ENCODE measurements at regions of chr16 and their contacts with region 1.

Region 1: GRCh38 chr16:88628512-88628974 is 9.8 kb upstream of the IL17C start:
- DNase-seq: peak; percentile 77 to 90 (median 87)
- ATAC-seq: peak; percentile 97
- H3K4me3 ChIP-seq: no peak overlapping the region
- H3K27ac ChIP-seq: peak overlapping the region; percentile 73
- H3K4me1 ChIP-seq: peaks cover 10 to 56% of the 10 kb centered on the region in 2 experiments; a peak in 4 of 5 replicates
- H3K27me3 ChIP-seq: no peaks in the 10 kb centered on the region
- CTCF ChIP-seq: peak; percentile 79 to 91 (median 84)
- EP300 ChIP-seq: no peak; the same call in 1 of the 2 replicates
- POLR2A ChIP-seq: no peak; the same call in 1 of the 2 replicates
- RAD21 ChIP-seq: peak; percentile 34 to 65; a peak in 3 of 4 replicates

Region 2: GRCh38 chr16:88639231-88640038 is 10.9 kb after region 1 on chr16:
- CTCF ChIA-PET with region 1: no interaction called
- POLR2A ChIA-PET with region 1: interaction called, 12 read pairs
- in situ Hi-C with region 1: no loop called
- intact Hi-C with region 1: no loop called
- DNase-seq: peak in 2 of 4 experiments; percentile 60 to 69
- ATAC-seq: peak; percentile 44
- H3K4me3 ChIP-seq: no peak overlapping the region
- H3K27ac ChIP-seq: no peak overlapping the region
- H3K4me1 ChIP-seq: peaks cover 13 to 79% of the 10 kb centered on the region in 2 experiments
- H3K27me3 ChIP-seq: peaks cover 13 to 18% of the 10 kb centered on the region in 2 experiments; a peak in 3 of 5 replicates
- CTCF ChIP-seq: no peak
- EP300 ChIP-seq: no peak
- POLR2A ChIP-seq: no peak
- RAD21 ChIP-seq: no peak

Region 3: DNA sequence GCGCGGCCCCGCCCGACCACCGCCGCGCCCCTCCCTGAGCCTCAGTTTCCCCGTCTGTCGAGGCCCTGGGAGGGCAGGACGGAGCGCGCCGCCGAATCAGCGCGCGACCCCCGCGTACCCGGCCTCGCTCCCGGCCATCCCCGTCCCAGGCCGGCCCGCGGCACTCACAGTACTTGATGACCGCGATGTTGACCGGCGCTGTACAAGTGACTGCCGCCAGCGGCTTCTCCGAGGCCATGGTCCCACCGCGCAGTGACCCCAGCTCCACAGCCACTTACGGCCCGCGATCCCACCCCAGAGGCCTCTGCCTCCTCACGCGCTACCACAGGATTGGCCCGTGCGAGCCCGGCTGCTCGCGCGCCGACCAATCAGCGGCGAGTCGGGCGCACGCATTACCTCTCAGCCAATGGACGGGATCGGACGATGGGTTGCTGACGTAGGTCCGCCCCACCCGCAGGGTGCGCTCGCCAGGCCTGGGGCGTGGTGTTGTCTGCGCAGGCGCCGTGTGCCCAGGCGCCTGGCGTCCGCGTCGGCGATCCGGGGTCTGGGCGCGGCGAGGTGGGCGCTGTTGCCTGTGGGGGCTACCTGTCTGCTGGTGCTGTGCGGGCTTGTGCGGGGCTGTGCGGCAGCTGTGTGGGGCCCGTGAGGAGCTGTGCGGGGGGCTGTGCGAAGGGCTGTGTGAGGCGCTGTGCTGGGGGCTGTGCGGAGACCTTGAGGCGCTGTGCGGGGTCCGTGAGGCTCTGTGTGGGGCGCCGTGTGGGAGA is 34.5 kb after region 1 on chr16 and contains the start of gene MVD:
- CTCF ChIA-PET with region 1: no interaction called
- POLR2A ChIA-PET with region 1: no interaction called
- in situ Hi-C with region 1: no loop called
- intact Hi-C with region 1: no loop called
- DNase-seq: peak; percentile 100
- ATAC-seq: peak; percentile 99
- H3K4me3 ChIP-seq: peak within 1 kb of the TSS; percentile 92
- H3K27ac ChIP-seq: peak within 1 kb of the TSS; percentile 88
- H3K4me1 ChIP-seq: peaks cover 17 to 71% of the 10 kb centered on the region in 2 experiments
- H3K27me3 ChIP-seq: no peaks in the 10 kb centered on the region
- CTCF ChIP-seq: peak in 1 of 3 experiments; percentile 21; a peak in 1 of 6 replicates
- EP300 ChIP-seq: no peak
- POLR2A ChIP-seq: peak; percentile 92
- RAD21 ChIP-seq: peak in 1 of 2 experiments; percentile 11; a peak in 1 of 4 replicates
- polyA plus RNA-seq, gene MVD: 12.2 to 15.4 TPM

Region 4: GRCh38 chr16:88686439-88687253 is 58.1 kb after region 1 on chr16 and contains the start of gene SNAI3:
- CTCF ChIA-PET with region 1: no interaction called
- POLR2A ChIA-PET with region 1: no interaction called
- in situ Hi-C with region 1: no loop called
- intact Hi-C with region 1: loop called (anchors 5 kb)
- DNase-seq: peak; percentile 97 to 98 (median 98)
- ATAC-seq: peak; percentile 94
- H3K4me3 ChIP-seq: peak within 1 kb of the TSS; percentile 60
- H3K27ac ChIP-seq: peak within 1 kb of the TSS; percentile 44; the same call in 2 of the 3 replicates
- H3K4me1 ChIP-seq: peaks cover 38 to 75% of the 10 kb centered on the region in 2 experiments
- H3K27me3 ChIP-seq: no peaks in the 10 kb centered on the region
- CTCF ChIP-seq: no peak
- EP300 ChIP-seq: no peak
- POLR2A ChIP-seq: peak; percentile 74
- RAD21 ChIP-seq: no peak
- polyA plus RNA-seq, gene SNAI3: 0.04 TPM in 1 of 2 experiments, not detected in the other

Region 5: DNA sequence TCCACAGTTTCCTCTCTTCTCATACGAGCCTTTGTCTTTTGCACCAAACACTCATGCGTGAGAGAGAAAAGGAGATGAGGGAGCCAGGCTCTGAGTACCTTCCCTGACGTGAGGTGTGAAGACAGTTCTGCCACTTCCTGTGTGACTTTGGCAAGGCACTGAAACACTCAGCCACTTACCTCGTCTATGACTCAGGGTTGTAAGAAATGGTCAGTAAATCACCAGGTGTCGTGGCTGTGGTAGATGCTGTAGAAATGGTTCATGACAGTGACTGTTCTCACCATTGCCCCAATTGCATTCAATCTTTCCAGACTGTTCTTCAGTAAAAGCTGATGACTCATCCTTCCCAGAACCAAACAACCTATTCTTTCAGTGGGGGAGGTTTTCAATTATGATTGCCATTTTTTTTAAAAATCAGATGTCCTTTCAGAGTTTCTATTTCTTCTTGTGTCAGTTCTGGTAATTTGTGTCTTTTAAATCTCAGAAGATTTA is 397.6 kb after region 1 on chr16:
- CTCF ChIA-PET with region 1: no interaction called
- POLR2A ChIA-PET with region 1: no interaction called
- in situ Hi-C with region 1: no loop called
- intact Hi-C with region 1: no loop called
- DNase-seq: peak; percentile 49 to 81 (median 72)
- ATAC-seq: peak; percentile 93
- H3K4me3 ChIP-seq: no peak overlapping the region
- H3K27ac ChIP-seq: peak overlapping the region; percentile 48; the same call in 2 of the 3 replicates
- H3K4me1 ChIP-seq: peaks cover 24 to 26% of the 10 kb centered on the region in 2 experiments
- H3K27me3 ChIP-seq: no peaks in the 10 kb centered on the region
- CTCF ChIP-seq: no peak
- EP300 ChIP-seq: peak; percentile 77
- POLR2A ChIP-seq: no peak
- RAD21 ChIP-seq: peak in 1 of 2 experiments; percentile 25; a peak in 2 of 4 replicates

Measured in K562 (cell line).